ENCODE measurements at regions of chr6 and their contacts with region 1.

Region 1: GRCh38 chr6:30489081-30490025 is at the start of gene HLA-E:
- DNase-seq: peak; percentile 90 to 97
- ATAC-seq: peak; percentile 94
- total RNA-seq, gene HLA-E: 332 to 370 TPM

Region 2: GRCh38 chr6:30378290-30378937 is 110.9 kb before region 1 on chr6:
- intact Hi-C with region 1: no loop called
- DNase-seq: no peak
- ATAC-seq: no peak

Region 3: DNA sequence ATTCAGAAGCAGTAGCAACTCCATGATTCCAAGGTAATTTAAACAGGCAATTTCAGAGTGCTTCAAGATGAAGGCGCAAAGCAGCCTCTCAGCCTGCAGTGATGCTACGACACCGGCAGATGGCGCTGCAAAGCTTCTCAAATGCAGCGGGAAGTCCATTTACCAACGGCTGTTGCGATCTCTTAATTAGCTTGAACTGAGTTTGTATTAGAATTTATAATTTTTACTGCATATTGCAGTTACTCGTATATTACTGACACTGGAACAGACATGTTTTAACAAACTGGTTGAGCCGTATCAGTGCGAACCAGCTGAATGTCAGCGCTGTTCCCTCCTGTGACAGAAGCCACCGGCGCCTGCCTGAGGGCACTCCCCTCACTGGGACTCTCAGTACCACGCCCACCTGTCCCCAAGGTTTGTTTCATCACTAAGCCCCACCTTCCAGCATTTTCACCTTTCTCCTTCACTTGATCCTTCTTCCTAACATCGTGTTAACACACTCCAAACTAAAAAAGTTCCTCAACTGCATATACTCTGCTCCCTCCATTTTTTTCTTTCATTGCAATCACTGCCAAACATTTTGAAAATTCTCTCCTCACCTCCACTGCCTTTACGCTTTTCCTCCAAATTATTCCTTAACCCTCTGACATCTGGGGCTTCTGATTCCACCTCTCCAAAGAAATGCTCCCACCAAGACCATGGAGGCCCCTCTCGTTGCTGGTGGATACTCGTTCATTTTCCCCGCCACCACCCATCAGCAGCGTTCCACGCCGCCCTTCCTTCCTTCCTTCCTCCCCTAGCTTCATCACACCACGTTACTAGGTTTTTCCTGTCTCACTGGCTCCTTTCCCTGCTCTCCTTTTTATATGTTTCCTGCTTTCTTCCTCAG is 52.4 kb after region 1 on chr6:
- intact Hi-C with region 1: loop called in 1 of 2 experiments (anchors 10 kb)
- DNase-seq: peak; percentile 67 to 73
- ATAC-seq: peak; percentile 88